GM10248 (cell line): ENCODE measurements at regions of chr7 and their contacts with region 1.

Region 1: GRCh38 chr7:12458520-12459131 is 55.0 kb upstream of the VWDE start:
- DNase-seq: peak; percentile 35
- CTCF ChIP-seq: peak; percentile 58

Region 2: DNA sequence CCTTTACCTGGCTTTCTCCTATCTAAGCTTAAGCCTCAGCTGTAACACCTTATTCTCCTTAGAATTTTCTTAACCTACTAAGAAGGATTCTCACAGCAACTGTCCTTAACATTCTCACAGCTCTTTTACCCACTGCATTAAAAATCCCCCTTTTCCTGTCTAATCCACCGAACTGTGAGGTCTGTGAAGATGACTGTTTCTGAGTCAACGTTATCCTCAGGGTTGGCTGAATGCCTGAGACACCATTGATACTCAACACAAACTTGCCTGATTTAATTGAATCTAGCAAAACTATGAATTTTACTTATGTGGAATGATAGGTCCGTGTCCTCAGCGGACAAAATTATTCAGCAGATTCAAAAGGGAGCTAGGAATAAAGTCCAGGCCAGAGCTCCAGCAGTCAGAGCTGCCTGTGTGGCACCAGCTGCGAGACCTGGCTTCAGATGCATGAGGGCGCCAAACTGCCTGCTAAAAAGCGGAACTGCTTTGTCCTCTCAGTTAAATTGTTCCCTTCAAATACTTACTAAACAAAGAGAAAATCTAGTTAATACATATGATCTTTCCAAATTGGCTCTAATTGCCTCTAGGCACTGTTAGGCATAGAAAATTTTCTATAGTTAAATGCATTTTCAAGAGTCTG is 21.6 kb before region 1 on chr7:
- CTCF ChIA-PET with region 1: interaction called, 18 read pairs
- POLR2A ChIA-PET with region 1: no interaction called
- DNase-seq: no peak
- CTCF ChIP-seq: no peak

Region 3: GRCh38 chr7:12469568-12469967 is 10.9 kb after region 1 on chr7:
- CTCF ChIA-PET with region 1: interaction called, 31 read pairs
- POLR2A ChIA-PET with region 1: no interaction called
- DNase-seq: no peak
- CTCF ChIP-seq: no peak

Region 4: DNA sequence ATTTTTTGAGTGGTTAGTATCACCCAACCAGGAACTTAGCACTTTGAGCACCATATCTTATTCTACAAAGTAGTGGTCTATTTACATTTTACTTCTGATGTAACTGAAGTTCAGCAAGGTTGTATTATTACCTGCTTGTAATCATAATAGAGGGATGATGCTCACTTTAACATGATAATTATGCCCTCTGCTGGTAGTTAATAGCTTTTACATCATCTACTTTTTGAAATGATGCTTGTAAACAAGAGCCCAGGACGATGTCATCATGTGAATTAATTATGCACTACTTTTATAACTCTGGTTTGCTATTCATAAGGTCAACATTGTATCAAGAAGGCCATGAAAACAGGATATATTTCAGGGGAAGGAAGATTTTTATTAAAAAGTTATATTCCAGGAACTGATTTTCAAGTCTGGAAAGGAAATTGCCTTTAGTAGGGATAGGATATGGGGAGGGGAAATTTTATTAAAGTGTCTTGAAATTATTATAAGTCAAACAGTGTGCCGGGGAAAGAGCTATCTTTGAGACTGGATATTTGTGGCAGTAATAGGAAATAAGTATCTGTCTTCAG is 31.6 kb after region 1 on chr7:
- CTCF ChIA-PET with region 1: interaction called, 87 read pairs
- POLR2A ChIA-PET with region 1: no interaction called
- DNase-seq: no peak
- CTCF ChIP-seq: peak; percentile 46

Region 5: GRCh38 chr7:12531784-12532183 is 73.2 kb after region 1 on chr7:
- CTCF ChIA-PET with region 1: interaction called, 10 read pairs
- POLR2A ChIA-PET with region 1: no interaction called
- DNase-seq: no peak
- CTCF ChIP-seq: no peak